Activated naive CD4-positive, alpha-beta T cell treated with anti-CD3 and anti-CD28 coated beads for 36 hours (primary cell): ENCODE measurements at regions of chr12 and their contacts with region 1.

Region 1: GRCh38 chr12:57476162-57476992 is 3.3 kb downstream of the ARHGAP9 start:
- DNase-seq: peak; percentile 94
- H3K4me3 Mint-ChIP-seq: peak overlapping the region; percentile 84
- H3K27ac Mint-ChIP-seq: peak overlapping the region; percentile 99
- H3K4me1 Mint-ChIP-seq: peaks cover 65% of the 10 kb centered on the region
- H3K27me3 Mint-ChIP-seq: no peaks in the 10 kb centered on the region

Region 2: GRCh38 chr12:57088459-57089248 is 387.7 kb before region 1 on chr12 and contains the start of gene NAB2:
- CTCF ChIA-PET with region 1: no interaction called
- intact Hi-C with region 1: loop called (anchors 5 kb)
- DNase-seq: peak; percentile 92
- H3K4me3 Mint-ChIP-seq: peak within 1 kb of the TSS; percentile 91
- H3K27ac Mint-ChIP-seq: peak within 1 kb of the TSS; percentile 99
- H3K4me1 Mint-ChIP-seq: peaks cover 61% of the 10 kb centered on the region
- H3K27me3 Mint-ChIP-seq: no peaks in the 10 kb centered on the region
- total RNA-seq, gene NAB2: 18.4 to 19.1 TPM

Region 3: GRCh38 chr12:57135527-57136326 is 340.6 kb before region 1 on chr12:
- CTCF ChIA-PET with region 1: no interaction called
- intact Hi-C with region 1: no loop called
- DNase-seq: no peak
- H3K4me3 Mint-ChIP-seq: no peak overlapping the region
- H3K27ac Mint-ChIP-seq: no peak overlapping the region
- H3K4me1 Mint-ChIP-seq: peaks cover 2% of the 10 kb centered on the region
- H3K27me3 Mint-ChIP-seq: no peaks in the 10 kb centered on the region

Region 4: DNA sequence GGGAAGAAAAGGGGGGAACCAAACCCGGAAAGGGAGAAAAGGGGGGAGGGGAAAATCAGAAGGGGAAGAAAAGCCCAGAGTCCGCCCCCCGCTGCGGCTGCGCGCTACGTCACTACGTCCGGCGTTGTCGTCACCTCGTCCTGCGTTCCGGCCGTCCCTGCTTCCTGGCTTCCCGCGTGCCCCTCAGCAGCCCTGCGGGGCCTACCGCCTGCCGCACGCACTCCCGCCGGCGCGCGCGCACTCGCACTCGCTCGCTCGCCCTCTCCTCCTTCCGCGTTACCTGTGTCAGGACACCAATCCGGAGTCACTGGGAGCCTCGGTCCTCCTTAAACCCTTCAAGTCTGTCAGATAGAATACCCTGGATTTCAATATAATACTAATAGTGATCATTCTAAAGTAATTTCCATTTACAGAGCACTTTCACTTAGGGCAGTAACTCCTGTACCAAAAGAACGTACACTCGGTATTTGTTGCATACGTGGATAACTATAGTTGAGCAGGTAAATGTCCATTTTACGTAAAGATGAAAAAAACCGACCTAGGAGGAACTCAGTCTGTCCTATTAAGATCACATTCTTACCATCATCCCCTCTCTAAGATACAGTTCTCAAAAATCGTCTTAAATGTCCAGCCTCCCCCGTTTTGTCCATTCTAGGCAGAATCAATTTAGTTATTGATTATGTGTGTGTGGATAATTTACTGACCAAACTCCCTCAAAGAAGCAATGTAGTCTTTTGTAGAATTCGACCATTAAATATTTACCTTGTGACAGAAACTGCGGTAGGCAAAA is 45.3 kb before region 1 on chr12 and contains the start of gene R3HDM2:
- CTCF ChIA-PET with region 1: no interaction called
- intact Hi-C with region 1: loop called (anchors 1 kb)
- DNase-seq: peak; percentile 97
- H3K4me3 Mint-ChIP-seq: peak within 1 kb of the TSS; percentile 94
- H3K27ac Mint-ChIP-seq: peak within 1 kb of the TSS; percentile 98
- H3K4me1 Mint-ChIP-seq: peaks cover 37% of the 10 kb centered on the region
- H3K27me3 Mint-ChIP-seq: no peaks in the 10 kb centered on the region
- total RNA-seq, gene R3HDM2: 42.2 to 44.8 TPM

Region 5: DNA sequence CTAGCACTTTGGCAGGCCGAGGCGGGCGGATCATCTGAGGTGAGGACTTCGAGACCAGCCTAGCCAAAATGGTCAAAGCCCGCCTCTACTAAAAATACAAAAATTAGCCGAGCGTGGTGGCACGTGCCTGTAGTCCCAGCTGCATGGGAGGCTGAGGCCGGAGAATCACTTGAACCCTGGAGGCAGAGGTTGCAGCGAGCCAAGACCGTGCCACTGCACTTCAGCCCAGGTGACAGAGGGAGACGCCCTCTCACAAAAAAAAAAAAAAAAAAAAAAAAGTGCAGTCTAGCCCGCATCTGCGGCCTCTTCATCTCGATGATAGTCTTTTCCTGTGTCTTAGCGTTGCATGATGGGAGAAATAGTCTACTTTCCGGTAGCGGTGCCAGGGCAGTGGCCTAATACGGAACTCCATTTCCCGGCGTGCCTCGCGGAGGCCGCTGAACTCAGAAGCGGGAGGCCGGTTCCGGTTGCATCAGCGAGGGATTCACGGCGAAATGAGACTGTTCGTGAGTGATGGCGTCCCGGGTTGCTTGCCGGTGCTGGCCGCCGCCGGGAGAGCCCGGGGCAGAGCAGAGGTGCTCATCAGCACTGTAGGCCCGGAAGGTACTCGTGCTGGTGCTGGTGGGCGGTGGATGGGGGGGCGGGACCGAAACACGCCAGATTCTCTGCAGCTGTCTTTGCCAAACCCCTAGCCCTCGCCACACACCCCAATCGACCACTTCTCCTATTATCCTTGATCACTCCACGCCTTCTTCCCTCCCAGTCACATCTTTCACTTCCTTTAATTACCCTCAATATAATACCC is 11.4 kb after region 1 on chr12 and contains the start of gene MARS1:
- CTCF ChIA-PET with region 1: interaction called, 13 read pairs
- intact Hi-C with region 1: loop called (anchors 1 kb)
- DNase-seq: peak; percentile 97
- H3K4me3 Mint-ChIP-seq: peak within 1 kb of the TSS; percentile 97
- H3K27ac Mint-ChIP-seq: peak within 1 kb of the TSS; percentile 94
- H3K4me1 Mint-ChIP-seq: peaks cover 49% of the 10 kb centered on the region
- H3K27me3 Mint-ChIP-seq: no peaks in the 10 kb centered on the region
- total RNA-seq, gene MARS1: 481 to 489 TPM

Region 6: GRCh38 chr12:57632694-57633477 is 156.5 kb after region 1 on chr12 and contains the start of gene B4GALNT1:
- CTCF ChIA-PET with region 1: no interaction called
- intact Hi-C with region 1: loop called (anchors 1 kb)
- DNase-seq: peak; percentile 65
- H3K4me3 Mint-ChIP-seq: peak within 1 kb of the TSS; percentile 73
- H3K27ac Mint-ChIP-seq: no peak within 1 kb of the TSS
- H3K4me1 Mint-ChIP-seq: peaks cover 8% of the 10 kb centered on the region
- H3K27me3 Mint-ChIP-seq: peaks cover 52% of the 10 kb centered on the region
- total RNA-seq, gene B4GALNT1: 1.4 to 1.8 TPM

Region 7: DNA sequence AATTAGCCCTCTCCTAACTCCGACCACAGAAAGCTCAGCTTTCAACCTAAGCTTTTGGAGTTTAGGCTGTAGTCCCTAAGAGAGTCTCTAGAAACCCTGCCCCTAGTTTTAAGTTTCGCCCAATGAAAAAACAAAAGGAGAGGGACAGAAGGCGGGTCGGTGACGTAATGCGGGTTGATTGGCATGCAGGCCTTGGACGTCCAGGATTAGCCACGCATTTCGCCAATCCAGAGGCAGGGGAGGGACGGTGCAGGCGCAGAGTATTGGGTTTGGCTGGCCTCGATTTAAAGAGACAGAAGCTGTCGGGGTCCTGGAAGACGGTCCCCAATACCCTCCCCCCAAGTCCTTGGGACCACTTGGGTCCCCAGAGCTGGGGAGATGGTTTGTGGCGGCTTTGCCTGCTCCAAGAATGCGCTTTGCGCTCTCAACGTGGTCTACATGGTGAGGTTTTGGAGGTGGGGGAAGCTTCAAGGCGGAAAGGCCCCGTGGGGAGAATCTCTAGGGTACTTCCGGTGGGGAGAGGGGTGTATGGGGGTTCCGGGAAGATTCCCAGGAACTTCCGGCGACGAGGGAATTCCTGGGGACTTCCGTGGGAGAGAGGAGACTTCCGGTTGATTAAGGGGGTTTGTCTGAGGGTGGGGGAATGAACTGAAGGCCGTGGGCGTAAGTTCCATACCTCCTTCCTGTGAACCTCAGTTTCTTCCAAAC is 268.6 kb after region 1 on chr12 and contains the start of gene TSPAN31:
- CTCF ChIA-PET with region 1: no interaction called
- intact Hi-C with region 1: loop called (anchors 2 kb)
- DNase-seq: peak; percentile 99
- H3K4me3 Mint-ChIP-seq: peak within 1 kb of the TSS; percentile 85
- H3K27ac Mint-ChIP-seq: peak within 1 kb of the TSS; percentile 94
- H3K4me1 Mint-ChIP-seq: peaks cover 40% of the 10 kb centered on the region
- H3K27me3 Mint-ChIP-seq: no peaks in the 10 kb centered on the region
- total RNA-seq, gene TSPAN31: 6.4 to 7.7 TPM

Region 8: GRCh38 chr12:57846577-57847319 is 370.4 kb after region 1 on chr12 and contains the start of gene CTDSP2:
- CTCF ChIA-PET with region 1: no interaction called
- intact Hi-C with region 1: loop called (anchors 2 kb)
- DNase-seq: peak; percentile 93
- H3K4me3 Mint-ChIP-seq: peak within 1 kb of the TSS; percentile 88
- H3K27ac Mint-ChIP-seq: peak within 1 kb of the TSS; percentile 92
- H3K4me1 Mint-ChIP-seq: peaks cover 44% of the 10 kb centered on the region
- H3K27me3 Mint-ChIP-seq: peaks cover 7% of the 10 kb centered on the region
- total RNA-seq, gene CTDSP2: 94.6 to 99.8 TPM